Left cardiac atrium (tissue), 4 donors: ENCODE measurements at regions of chr10 and their contacts with region 1.

Region 1: GRCh38 chr10:123994417-123995081 is 98.8 kb downstream of the CHST15 start:
- DNase-seq: peak; percentile 89
- ATAC-seq: peak; percentile 90

Region 2: DNA sequence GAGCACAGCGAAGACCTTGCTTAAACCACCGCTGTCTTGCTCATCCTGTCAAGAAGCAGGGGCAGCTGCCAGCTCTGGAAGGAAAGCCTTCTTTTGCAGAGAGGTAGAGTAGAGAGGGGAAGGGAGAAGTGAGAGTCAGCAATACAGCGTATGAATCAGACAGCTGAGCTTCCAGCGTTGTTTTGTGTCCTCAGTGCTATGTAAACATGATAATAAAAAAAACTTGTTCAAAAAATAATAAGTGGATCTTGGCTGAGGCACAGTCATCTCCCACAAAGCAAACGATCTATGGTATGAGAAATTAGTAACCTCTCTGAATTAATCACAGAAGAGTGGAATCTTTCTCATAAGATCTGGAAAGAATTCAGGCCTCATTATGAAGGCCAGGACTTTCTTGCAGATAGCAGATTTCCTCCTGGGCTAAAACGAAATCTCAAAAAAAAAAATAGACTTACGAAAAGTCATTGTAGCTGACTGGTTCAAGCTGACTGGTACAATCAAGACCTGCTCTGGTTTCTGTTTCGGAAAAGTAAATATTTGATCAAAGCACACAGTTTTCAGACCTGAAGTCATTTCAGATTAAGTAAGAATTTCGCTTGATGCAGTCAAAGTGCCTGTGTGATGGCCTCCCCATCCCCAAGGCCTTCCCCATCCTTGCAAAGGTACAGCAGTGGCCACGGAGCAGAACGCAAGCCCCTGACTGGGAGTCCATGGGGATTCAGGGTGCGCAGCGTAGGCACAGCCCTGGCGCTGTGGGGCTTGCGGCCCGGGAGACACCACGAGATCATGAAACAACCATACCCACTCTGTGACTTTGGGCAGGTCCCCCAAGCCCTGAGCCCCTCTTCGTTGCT is 69.4 kb after region 1 on chr10:
- intact Hi-C with region 1: no loop called
- DNase-seq: no peak
- ATAC-seq: peak; percentile 67 to 96

Region 3: GRCh38 chr10:124262234-124262865 is 267.8 kb after region 1 on chr10:
- intact Hi-C with region 1: loop called (anchors 5 to 10 kb)
- DNase-seq: no peak
- ATAC-seq: no peak

Region 4: GRCh38 chr10:124267231-124267885 is 272.8 kb after region 1 on chr10:
- intact Hi-C with region 1: loop called (anchors 5 to 10 kb)
- DNase-seq: no peak
- ATAC-seq: peak in 1 of 2 donors; percentile 87

Region 5: GRCh38 chr10:124388823-124389612 is 394.5 kb after region 1 on chr10:
- intact Hi-C with region 1: loop called (anchors 1 to 2 kb)
- DNase-seq: peak; percentile 91
- ATAC-seq: peak; percentile 99